Panc1 (cell line): ENCODE measurements at regions of chr10 and their contacts with region 1.

Region 1: GRCh38 chr10:63115732-63116383 is 17.3 kb upstream of the NRBF2 start:
- DNase-seq: no peak
- ATAC-seq: no peak
- H3K4me3 ChIP-seq: no peak overlapping the region
- H3K27ac ChIP-seq: no peak overlapping the region
- H3K4me1 ChIP-seq: peaks cover 3% of the 10 kb centered on the region; the same call in 1 of the 2 replicates
- H3K27me3 ChIP-seq: no peaks in the 10 kb centered on the region
- CTCF ChIP-seq: no peak

Region 2: DNA sequence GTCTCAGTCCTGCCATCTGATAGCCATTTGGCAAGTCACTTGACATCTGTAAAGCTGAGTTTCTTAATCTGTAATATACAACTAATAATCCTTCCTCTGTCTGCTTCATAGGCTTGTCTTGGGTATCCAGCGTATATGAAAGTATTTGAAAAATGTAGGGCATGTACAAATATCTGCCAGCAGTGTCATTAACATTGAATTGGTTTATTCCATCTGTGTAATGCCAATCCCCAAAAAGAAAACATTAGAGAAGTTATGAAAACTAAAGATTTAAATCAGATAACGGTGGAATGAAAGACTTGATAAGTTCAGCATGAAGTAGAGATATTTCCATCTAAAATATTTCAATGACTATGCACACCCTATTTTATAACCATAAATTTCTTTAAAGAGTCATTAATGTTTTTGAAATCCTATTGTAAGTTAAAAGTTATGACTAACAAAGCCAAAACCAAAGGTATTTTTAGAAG is 837.4 kb before region 1 on chr10:
- CTCF ChIA-PET with region 1: no interaction called
- POLR2A ChIA-PET with region 1: no interaction called
- in situ Hi-C with region 1: no loop called
- intact Hi-C with region 1: no loop called
- DNase-seq: no peak
- ATAC-seq: peak; percentile 60; the same call in 1 of the 2 replicates
- H3K4me3 ChIP-seq: no peak overlapping the region
- H3K27ac ChIP-seq: no peak overlapping the region; the same call in 1 of the 2 replicates
- H3K4me1 ChIP-seq: no peaks in the 10 kb centered on the region
- H3K27me3 ChIP-seq: no peaks in the 10 kb centered on the region
- CTCF ChIP-seq: no peak

Region 3: DNA sequence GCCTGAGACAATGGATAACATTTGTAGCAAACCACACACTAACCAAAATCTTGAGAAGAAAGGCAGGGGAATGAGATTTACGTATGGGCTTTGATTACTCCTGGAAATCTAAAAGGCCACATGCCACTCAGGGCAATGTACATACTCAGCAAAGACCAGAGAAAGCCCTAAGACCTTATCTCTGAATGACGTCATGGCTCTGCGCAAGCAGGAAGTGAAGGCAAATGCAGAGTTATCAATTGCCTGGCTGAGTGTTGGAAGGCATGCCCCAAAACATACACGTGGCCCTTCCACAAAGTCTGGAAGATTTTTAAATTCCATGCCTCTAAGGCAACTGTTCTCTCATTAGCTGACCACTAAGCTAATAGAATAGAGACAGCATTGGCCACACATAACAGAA is 73.6 kb before region 1 on chr10:
- CTCF ChIA-PET with region 1: no interaction called
- POLR2A ChIA-PET with region 1: interaction called, 10 read pairs
- in situ Hi-C with region 1: no loop called
- intact Hi-C with region 1: no loop called
- DNase-seq: no peak
- ATAC-seq: no peak
- H3K4me3 ChIP-seq: no peak overlapping the region
- H3K27ac ChIP-seq: no peak overlapping the region
- H3K4me1 ChIP-seq: no peaks in the 10 kb centered on the region
- H3K27me3 ChIP-seq: peaks cover 16% of the 10 kb centered on the region
- CTCF ChIP-seq: no peak

Region 4: DNA sequence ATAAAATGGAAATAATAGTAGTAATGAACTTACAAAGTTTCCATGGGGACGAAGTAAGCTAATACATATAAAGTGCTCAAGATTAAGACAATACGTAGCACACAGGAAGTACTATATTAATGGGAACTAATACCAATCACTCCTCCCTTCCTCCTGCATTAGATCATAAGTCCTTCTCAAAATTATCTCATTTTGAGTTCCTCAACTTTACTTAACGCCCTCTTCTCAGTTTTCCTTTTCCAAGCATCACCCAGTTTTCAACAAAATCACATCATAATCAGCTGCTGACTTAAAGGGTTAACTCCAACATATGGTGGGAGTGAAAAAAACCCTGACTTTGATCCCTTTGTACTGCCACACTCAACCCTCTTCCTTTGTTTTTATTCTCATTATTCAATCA is 325.5 kb after region 1 on chr10:
- CTCF ChIA-PET with region 1: no interaction called
- POLR2A ChIA-PET with region 1: no interaction called
- in situ Hi-C with region 1: no loop called
- intact Hi-C with region 1: no loop called
- DNase-seq: no peak
- ATAC-seq: no peak
- H3K4me3 ChIP-seq: no peak overlapping the region
- H3K27ac ChIP-seq: no peak overlapping the region
- H3K4me1 ChIP-seq: peaks cover 25% of the 10 kb centered on the region
- H3K27me3 ChIP-seq: no peaks in the 10 kb centered on the region
- CTCF ChIP-seq: no peak